ENCODE measurements at regions of chr17 and their contacts with region 1.

Region 1: GRCh38 chr17:65442250-65442649 is 119.2 kb downstream of the AXIN2 start:
- DNase-seq: no peak
- H3K4me3 ChIP-seq: no peak overlapping the region
- H3K27ac ChIP-seq: no peak overlapping the region
- H3K4me1 ChIP-seq: no peaks in the 10 kb centered on the region
- H3K27me3 ChIP-seq: peaks cover 3% of the 10 kb centered on the region
- CTCF ChIP-seq: no peak
- EP300 ChIP-seq: no peak
- POLR2A ChIP-seq: no peak

Region 2: DNA sequence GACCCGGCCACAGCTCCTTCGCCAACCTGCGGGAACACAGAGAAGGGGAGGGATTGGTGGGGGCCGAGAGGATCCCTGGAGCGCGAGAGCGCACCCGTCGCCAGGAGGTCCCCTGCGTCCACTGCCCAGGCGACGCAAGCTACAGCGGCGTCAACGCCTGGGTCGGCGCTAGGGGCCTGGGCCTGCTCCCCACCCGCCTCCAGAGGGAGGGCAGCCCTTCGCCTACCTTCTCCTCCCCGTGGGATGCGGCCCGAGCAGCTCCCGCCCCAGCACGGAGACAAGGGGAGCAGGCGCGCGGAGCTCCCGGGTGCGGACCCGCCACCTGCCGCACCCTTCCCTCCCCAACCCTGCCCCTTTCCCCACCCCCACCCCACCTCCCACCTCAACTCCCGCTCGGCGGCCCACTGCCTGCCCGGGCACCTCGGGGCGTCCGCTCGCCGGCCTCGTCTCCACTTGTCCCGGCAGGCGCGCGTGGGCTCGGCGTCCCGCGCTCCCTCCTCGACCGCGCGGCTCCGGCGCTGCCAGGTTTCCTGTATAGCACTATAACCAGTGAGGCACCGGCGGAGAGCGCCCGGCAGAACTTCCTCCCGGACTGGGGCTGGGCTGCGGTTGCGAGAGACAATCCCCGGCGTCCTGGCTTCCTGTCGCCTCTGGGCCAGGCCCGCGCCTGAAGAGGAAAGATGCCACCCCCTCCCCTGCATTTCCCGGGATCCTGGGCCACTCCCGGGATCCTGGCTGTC is 661.1 kb before region 1 on chr17:
- in situ Hi-C with region 1: no loop called
- intact Hi-C with region 1: loop called (anchors 5 kb)
- DNase-seq: peak; percentile 75
- H3K4me3 ChIP-seq: peak overlapping the region; percentile 30 to 48 (median 38)
- H3K27ac ChIP-seq: peak overlapping the region; percentile 62 to 82 (median 77)
- H3K4me1 ChIP-seq: peaks cover 40 to 58% (median 56%) of the 10 kb centered on the region in 4 donors
- H3K27me3 ChIP-seq: peaks cover 44% of the 10 kb centered on the region
- CTCF ChIP-seq: no peak
- EP300 ChIP-seq: no peak
- POLR2A ChIP-seq: no peak

Region 3: GRCh38 chr17:65261682-65262636 is 180.3 kb before region 1 on chr17:
- in situ Hi-C with region 1: no loop called
- intact Hi-C with region 1: no loop called
- DNase-seq: no peak
- H3K4me3 ChIP-seq: no peak overlapping the region
- H3K27ac ChIP-seq: no peak overlapping the region
- H3K4me1 ChIP-seq: peaks cover 0 to 3% (median 0%) of the 10 kb centered on the region in 4 donors
- H3K27me3 ChIP-seq: no peaks in the 10 kb centered on the region
- CTCF ChIP-seq: no peak
- EP300 ChIP-seq: no peak
- POLR2A ChIP-seq: no peak

Measured in transverse colon (tissue), 4 donors.